PC-9 (cell line): ENCODE measurements at regions of chr20 and their contacts with region 1.

Region 1: DNA sequence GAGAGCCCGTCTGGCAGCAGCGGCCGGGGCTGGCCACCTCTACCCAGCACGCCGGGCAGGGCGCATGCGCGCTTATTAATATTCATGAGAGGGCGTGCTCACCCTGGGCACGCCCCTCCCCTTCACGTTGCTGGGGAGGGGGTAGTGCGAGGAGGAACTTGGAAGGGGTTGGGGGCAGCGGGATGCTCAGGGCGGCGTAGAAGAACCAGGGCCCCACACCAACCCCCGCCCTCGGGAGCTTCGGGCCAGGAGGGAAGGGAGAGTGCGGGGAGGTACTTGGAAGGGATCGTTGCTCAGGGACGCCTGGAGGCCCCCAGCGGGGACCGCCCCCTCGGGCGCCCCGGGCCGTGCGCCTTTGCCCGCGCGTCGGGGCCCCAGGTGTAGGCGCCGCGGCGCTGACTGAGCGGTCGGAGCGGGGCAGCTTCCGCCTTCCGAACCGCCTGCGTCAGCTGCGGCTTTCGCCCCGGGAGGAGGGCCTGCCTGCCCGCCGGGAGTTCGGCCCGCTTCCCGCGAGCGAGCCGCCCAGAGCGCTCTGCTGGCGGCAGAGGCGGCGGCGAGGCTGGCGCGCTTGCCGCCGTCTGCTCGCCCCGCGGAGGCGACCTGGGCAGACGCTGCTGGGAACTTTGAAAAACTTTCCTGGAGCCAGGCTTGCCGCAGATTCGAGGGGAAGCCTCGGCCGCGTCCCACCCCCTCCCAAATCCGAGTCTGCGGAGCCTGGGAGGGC is at the start of gene JAG1:
- DNase-seq: peak; percentile 79 to 97
- H3K4me3 ChIP-seq: peak within 1 kb of the TSS; percentile 84
- H3K27ac ChIP-seq: peak within 1 kb of the TSS; percentile 97
- H3K4me1 ChIP-seq: peaks cover 16% of the 10 kb centered on the region
- H3K27me3 ChIP-seq: no peaks in the 10 kb centered on the region
- CTCF ChIP-seq: no peak
- total RNA-seq, gene JAG1: 42.9 and 51.5 TPM in 2 replicates

Region 2: GRCh38 chr20:10316582-10316981 is 357.6 kb before region 1 on chr20:
- CTCF ChIA-PET with region 1: no interaction called
- POLR2A ChIA-PET with region 1: interaction called, 6 read pairs
- intact Hi-C with region 1: loop called (anchors 2 kb)
- DNase-seq: no peak
- H3K4me3 ChIP-seq: no peak overlapping the region
- H3K27ac ChIP-seq: no peak overlapping the region
- H3K4me1 ChIP-seq: peaks cover 14% of the 10 kb centered on the region
- H3K27me3 ChIP-seq: no peaks in the 10 kb centered on the region
- CTCF ChIP-seq: peak; percentile 44

Region 3: GRCh38 chr20:10603971-10604864 is 69.9 kb before region 1 on chr20:
- CTCF ChIA-PET with region 1: interaction called, 3 read pairs
- POLR2A ChIA-PET with region 1: interaction called, 14 read pairs
- intact Hi-C with region 1: loop called (anchors 2 kb)
- DNase-seq: peak; percentile 63 to 84
- H3K4me3 ChIP-seq: no peak overlapping the region
- H3K27ac ChIP-seq: peak overlapping the region; percentile 87
- H3K4me1 ChIP-seq: peaks cover 34% of the 10 kb centered on the region
- H3K27me3 ChIP-seq: no peaks in the 10 kb centered on the region
- CTCF ChIP-seq: no peak

Region 4: DNA sequence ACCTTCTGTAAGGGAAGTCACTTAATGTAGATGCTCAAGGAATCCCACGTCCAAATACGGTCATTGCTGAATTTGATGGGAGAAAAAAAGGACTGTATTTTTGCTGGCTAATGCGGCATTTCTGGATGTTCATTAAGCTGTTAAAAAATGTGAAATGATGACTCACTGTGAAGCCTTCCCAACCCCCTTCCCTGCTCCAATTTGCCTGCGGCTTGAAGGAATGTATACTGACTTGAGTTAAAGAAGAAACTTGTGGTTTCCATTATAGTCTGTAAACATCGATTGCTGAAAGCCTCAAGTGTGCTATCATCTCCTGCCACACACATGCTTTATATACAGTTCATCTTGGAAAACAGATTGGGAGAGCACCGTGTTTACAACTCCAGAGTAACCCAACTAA is 248.8 kb after region 1 on chr20:
- CTCF ChIA-PET with region 1: no interaction called
- POLR2A ChIA-PET with region 1: no interaction called
- intact Hi-C with region 1: loop called (anchors 2 kb)
- DNase-seq: peak; percentile 59 to 82
- H3K4me3 ChIP-seq: no peak overlapping the region
- H3K27ac ChIP-seq: peak overlapping the region; percentile 50
- H3K4me1 ChIP-seq: peaks cover 48% of the 10 kb centered on the region
- H3K27me3 ChIP-seq: no peaks in the 10 kb centered on the region
- CTCF ChIP-seq: no peak

Region 5: GRCh38 chr20:11204926-11205768 is 531.0 kb after region 1 on chr20:
- CTCF ChIA-PET with region 1: interaction called, 3 read pairs
- POLR2A ChIA-PET with region 1: no interaction called
- intact Hi-C with region 1: loop called (anchors 1 kb)
- DNase-seq: peak in 1 of 2 experiments; percentile 54
- H3K4me3 ChIP-seq: no peak overlapping the region
- H3K27ac ChIP-seq: no peak overlapping the region
- H3K4me1 ChIP-seq: peaks cover 7% of the 10 kb centered on the region; the same call in 1 of the 2 replicates
- H3K27me3 ChIP-seq: no peaks in the 10 kb centered on the region
- CTCF ChIP-seq: peak; percentile 68

Region 6: GRCh38 chr20:11454966-11455799 is 781.0 kb after region 1 on chr20:
- CTCF ChIA-PET with region 1: no interaction called
- POLR2A ChIA-PET with region 1: interaction called, 7 read pairs
- intact Hi-C with region 1: loop called (anchors 5 kb)
- DNase-seq: peak; percentile 49 to 90
- H3K4me3 ChIP-seq: peak overlapping the region; percentile 13; the same call in 1 of the 2 replicates
- H3K27ac ChIP-seq: peak overlapping the region; percentile 89
- H3K4me1 ChIP-seq: peaks cover 42% of the 10 kb centered on the region
- H3K27me3 ChIP-seq: no peaks in the 10 kb centered on the region
- CTCF ChIP-seq: no peak